ENCODE measurements at regions of chr1 and their contacts with region 1.

Region 1: GRCh38 chr1:154859786-154860155 is 10.3 kb downstream of the KCNN3 start:
- DNase-seq: no peak
- H3K4me3 ChIP-seq: no peak overlapping the region
- CTCF ChIP-seq: no peak

Region 2: DNA sequence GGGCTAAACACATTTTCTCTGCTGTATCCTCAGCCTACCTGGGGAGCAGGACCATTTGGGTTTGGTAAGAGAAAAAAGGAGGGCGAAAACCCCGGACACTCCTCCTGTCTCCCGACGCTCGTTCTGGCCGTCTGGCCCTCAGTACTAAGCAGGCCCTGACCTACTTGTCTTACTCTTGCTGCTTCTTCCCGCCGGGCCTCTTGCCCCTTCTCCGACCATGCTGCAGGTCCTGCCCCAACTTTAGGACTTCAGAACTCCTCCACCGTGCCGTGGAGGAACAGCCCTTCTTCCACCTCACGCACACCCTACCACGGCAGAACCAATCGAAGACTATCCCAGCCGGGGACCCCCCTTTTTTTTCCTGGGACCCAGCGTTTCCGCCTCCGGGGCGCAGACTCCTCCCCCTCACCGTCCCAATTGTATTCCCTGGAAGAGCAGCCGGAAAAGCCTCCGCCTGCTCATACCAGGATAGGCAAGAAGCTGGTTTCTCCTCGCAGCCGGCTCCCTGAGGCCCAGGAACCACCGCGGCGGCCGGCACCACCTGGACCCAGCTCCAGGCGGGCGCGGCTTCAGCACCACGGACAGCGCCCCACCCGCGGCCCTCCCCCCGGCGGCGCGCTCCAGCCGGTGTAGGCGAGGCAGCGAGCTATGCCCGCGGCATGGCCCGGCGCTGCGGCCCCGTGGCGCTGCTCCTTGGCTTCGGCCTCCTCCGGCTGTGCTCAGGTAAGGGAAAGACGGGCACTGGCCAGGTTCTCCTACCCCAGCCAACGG is 292.2 kb before region 1 on chr1 and contains the start of gene CHRNB2:
- in situ Hi-C with region 1: loop called (anchors 5 kb)
- DNase-seq: no peak
- H3K4me3 ChIP-seq: peak within 1 kb of the TSS; percentile 14
- CTCF ChIP-seq: no peak